ENCODE measurements at regions of chr1 and their contacts with region 1.

Region 1: DNA sequence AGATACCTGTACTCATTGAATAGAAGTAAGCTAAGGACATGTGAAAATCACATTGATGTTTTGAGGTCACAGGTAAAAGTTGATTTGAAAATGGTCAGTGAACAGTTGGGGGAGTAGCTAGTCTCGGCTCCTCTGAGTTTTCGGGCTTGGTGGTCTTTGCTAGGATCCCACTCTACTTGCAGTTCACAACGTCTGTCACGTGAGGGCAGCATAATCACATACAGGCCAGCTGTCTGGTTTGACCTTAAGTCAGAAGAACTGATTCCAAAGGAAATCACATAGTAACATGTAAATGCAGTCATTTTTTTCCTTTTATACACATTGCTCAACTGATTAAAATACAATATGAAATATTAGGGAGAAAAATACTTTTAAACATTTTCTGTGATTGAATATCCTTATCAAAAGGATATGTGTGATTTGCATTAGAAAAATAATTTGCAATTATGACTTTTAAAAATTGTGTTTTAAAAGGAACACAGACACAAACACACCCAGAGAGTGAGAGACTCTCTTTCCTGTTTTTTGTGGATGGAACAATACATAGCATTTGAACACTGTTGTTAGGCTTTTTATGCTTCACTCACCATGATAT is 21.8 kb upstream of the PDC start:
- DNase-seq: peak; percentile 88
- H3K4me3 ChIP-seq: no peak overlapping the region
- H3K27ac ChIP-seq: peak overlapping the region; percentile 11
- H3K4me1 ChIP-seq: peaks cover 10% of the 10 kb centered on the region
- H3K27me3 ChIP-seq: no peaks in the 10 kb centered on the region
- CTCF ChIP-seq: peak; percentile 99

Region 2: DNA sequence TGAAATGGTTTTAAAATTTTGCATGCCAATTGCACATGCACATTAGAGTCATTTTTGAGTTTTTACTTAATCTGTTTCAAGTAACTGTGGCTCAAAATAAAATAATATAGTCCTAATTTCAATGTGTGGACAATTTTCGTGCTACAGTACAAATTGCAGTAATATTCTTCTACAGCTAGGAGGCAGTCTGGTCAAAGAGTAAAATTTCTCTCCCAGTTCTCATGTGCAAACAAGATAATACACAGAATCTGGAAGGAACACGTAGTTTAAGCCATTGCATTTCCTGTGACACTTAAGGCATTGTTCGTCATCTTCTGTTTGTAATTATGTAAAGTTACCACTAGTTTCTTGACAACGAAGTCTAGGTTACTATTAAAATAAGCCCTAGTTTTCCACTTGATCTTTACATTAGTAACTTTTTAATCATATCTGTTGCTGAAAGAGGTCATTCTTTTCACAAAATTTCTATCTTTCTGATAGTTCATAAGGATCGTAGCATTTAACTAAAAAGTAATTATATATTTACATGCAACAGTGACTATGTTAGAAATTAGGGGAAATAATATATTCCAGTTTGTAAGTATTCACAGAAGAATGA is 78.2 kb before region 1 on chr1:
- CTCF ChIA-PET with region 1: no interaction called
- POLR2A ChIA-PET with region 1: no interaction called
- intact Hi-C with region 1: loop called (anchors 1 kb)
- DNase-seq: peak; percentile 90
- H3K4me3 ChIP-seq: no peak overlapping the region
- H3K27ac ChIP-seq: no peak overlapping the region
- H3K4me1 ChIP-seq: peaks cover 6% of the 10 kb centered on the region
- H3K27me3 ChIP-seq: no peaks in the 10 kb centered on the region
- CTCF ChIP-seq: peak; percentile 89

Region 3: GRCh38 chr1:186680245-186681061 is 197.7 kb after region 1 on chr1 and contains the start of gene PTGS2:
- CTCF ChIA-PET with region 1: interaction called, 7 read pairs
- POLR2A ChIA-PET with region 1: no interaction called
- intact Hi-C with region 1: loop called (anchors 2 kb)
- DNase-seq: peak; percentile 96
- H3K4me3 ChIP-seq: peak within 1 kb of the TSS; percentile 81
- H3K27ac ChIP-seq: peak within 1 kb of the TSS; percentile 92
- H3K4me1 ChIP-seq: peaks cover 21% of the 10 kb centered on the region
- H3K27me3 ChIP-seq: no peaks in the 10 kb centered on the region
- CTCF ChIP-seq: peak; percentile 78
- total RNA-seq, gene PTGS2: 4.3 and 5.8 TPM in 2 replicates